B cell (primary cell): ENCODE measurements at regions of chr11 and their contacts with region 1.

Region 1: GRCh38 chr11:45964911-45965389 is 42.5 kb downstream of the LARGE2 start:
- DNase-seq: peak; percentile 82
- ATAC-seq: peak; percentile 95
- H3K4me3 ChIP-seq: no peak overlapping the region
- H3K4me3 Mint-ChIP-seq: no peak overlapping the region
- H3K27ac ChIP-seq: peak overlapping the region in 1 of 2 donors; percentile 71
- H3K27ac Mint-ChIP-seq: no peak overlapping the region
- H3K4me1 ChIP-seq: peaks cover 5 to 6% of the 10 kb centered on the region in 2 donors
- H3K4me1 Mint-ChIP-seq: no peaks in the 10 kb centered on the region
- H3K27me3 ChIP-seq: no peaks in the 10 kb centered on the region
- H3K27me3 Mint-ChIP-seq: no peaks in the 10 kb centered on the region
- CTCF ChIP-seq: peak; percentile 95

Region 2: GRCh38 chr11:45778341-45778740 is 186.6 kb before region 1 on chr11:
- CTCF ChIA-PET with region 1: no interaction called
- POLR2A ChIA-PET with region 1: no interaction called
- intact Hi-C with region 1: no loop called
- DNase-seq: no peak
- ATAC-seq: no peak
- H3K4me3 ChIP-seq: no peak overlapping the region
- H3K4me3 Mint-ChIP-seq: no peak overlapping the region
- H3K27ac ChIP-seq: no peak overlapping the region
- H3K27ac Mint-ChIP-seq: no peak overlapping the region
- H3K4me1 ChIP-seq: no peaks in the 10 kb centered on the region
- H3K4me1 Mint-ChIP-seq: no peaks in the 10 kb centered on the region
- H3K27me3 ChIP-seq: peaks cover 0 to 4% (median 1%) of the 10 kb centered on the region in 4 experiments
- H3K27me3 Mint-ChIP-seq: peaks cover 31% of the 10 kb centered on the region
- CTCF ChIP-seq: no peak

Region 3: GRCh38 chr11:45872513-45873356 is 92.2 kb before region 1 on chr11:
- CTCF ChIA-PET with region 1: interaction called, 24 read pairs
- POLR2A ChIA-PET with region 1: no interaction called
- intact Hi-C with region 1: no loop called
- DNase-seq: peak; percentile 60
- ATAC-seq: peak; percentile 70
- H3K4me3 ChIP-seq: no peak overlapping the region
- H3K4me3 Mint-ChIP-seq: no peak overlapping the region
- H3K27ac ChIP-seq: no peak overlapping the region
- H3K27ac Mint-ChIP-seq: no peak overlapping the region
- H3K4me1 ChIP-seq: no peaks in the 10 kb centered on the region
- H3K4me1 Mint-ChIP-seq: no peaks in the 10 kb centered on the region
- H3K27me3 ChIP-seq: no peaks in the 10 kb centered on the region
- H3K27me3 Mint-ChIP-seq: no peaks in the 10 kb centered on the region
- CTCF ChIP-seq: peak; percentile 73

Region 4: DNA sequence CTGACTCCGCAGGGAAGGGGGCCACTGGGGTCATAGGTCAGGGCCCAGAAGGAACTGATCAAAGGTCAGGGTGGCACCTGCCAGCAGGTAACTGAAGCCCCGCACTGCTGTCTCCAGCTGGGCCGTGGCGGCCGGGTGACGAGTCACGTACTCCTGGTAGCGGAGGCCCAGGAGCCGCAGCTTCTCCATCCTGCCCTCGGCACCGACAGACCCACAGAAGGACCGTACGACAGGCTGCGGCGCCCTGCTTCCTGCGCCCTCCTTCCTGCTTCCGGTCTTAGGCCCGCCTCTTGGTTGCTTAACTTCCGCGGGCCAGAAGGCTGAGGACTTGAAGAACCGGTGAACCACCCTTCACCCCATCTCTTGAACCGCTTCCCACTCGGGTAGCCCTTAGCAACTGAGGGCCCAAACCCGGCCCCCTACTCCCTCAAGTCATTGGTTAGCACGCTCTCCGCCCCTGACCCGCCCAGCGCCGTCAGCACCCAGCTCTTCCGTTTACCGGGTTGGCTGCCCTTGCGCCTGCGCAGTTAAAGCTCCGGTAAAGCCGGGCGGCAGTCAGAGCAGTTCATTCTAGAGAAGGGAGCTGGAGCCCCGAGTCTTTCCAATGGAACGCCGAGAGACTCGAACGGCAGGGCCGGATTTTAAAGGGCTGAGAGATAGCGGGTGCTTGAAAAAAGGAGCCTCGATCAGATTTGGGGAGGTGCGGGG is 47.2 kb before region 1 on chr11 and contains the start of gene PEX16:
- CTCF ChIA-PET with region 1: interaction called, 58 read pairs
- POLR2A ChIA-PET with region 1: interaction called, 6 read pairs
- intact Hi-C with region 1: loop called (anchors 2 kb)
- DNase-seq: peak; percentile 99
- ATAC-seq: peak; percentile 83
- H3K4me3 ChIP-seq: peak within 1 kb of the TSS; percentile 86 to 99 (median 90)
- H3K4me3 Mint-ChIP-seq: peak within 1 kb of the TSS; percentile 92
- H3K27ac ChIP-seq: peak within 1 kb of the TSS; percentile 88 to 95
- H3K27ac Mint-ChIP-seq: peak within 1 kb of the TSS; percentile 94
- H3K4me1 ChIP-seq: peaks cover 44 to 57% of the 10 kb centered on the region in 2 donors
- H3K4me1 Mint-ChIP-seq: peaks cover 64% of the 10 kb centered on the region
- H3K27me3 ChIP-seq: no peaks in the 10 kb centered on the region
- H3K27me3 Mint-ChIP-seq: no peaks in the 10 kb centered on the region
- CTCF ChIP-seq: no peak
- total RNA-seq, gene PEX16: 107 and 113 TPM in 2 replicates

Region 5: GRCh38 chr11:45939836-45940235 is 25.1 kb before region 1 on chr11:
- CTCF ChIA-PET with region 1: interaction called, 36 read pairs
- POLR2A ChIA-PET with region 1: interaction called, 8 read pairs
- intact Hi-C with region 1: no loop called
- DNase-seq: no peak
- ATAC-seq: no peak
- H3K4me3 ChIP-seq: no peak overlapping the region
- H3K4me3 Mint-ChIP-seq: no peak overlapping the region
- H3K27ac ChIP-seq: peak overlapping the region; percentile 13 to 92
- H3K27ac Mint-ChIP-seq: peak overlapping the region; percentile 43
- H3K4me1 ChIP-seq: peaks cover 45 to 48% of the 10 kb centered on the region in 2 donors
- H3K4me1 Mint-ChIP-seq: peaks cover 52% of the 10 kb centered on the region
- H3K27me3 ChIP-seq: no peaks in the 10 kb centered on the region
- H3K27me3 Mint-ChIP-seq: no peaks in the 10 kb centered on the region
- CTCF ChIP-seq: no peak

Region 6: GRCh38 chr11:45982656-45983470 is 17.9 kb after region 1 on chr11:
- CTCF ChIA-PET with region 1: interaction called, 47 read pairs
- POLR2A ChIA-PET with region 1: no interaction called
- intact Hi-C with region 1: no loop called
- DNase-seq: no peak
- ATAC-seq: no peak
- H3K4me3 ChIP-seq: no peak overlapping the region
- H3K4me3 Mint-ChIP-seq: no peak overlapping the region
- H3K27ac ChIP-seq: no peak overlapping the region
- H3K27ac Mint-ChIP-seq: no peak overlapping the region
- H3K4me1 ChIP-seq: no peaks in the 10 kb centered on the region
- H3K4me1 Mint-ChIP-seq: peaks cover 12% of the 10 kb centered on the region
- H3K27me3 ChIP-seq: no peaks in the 10 kb centered on the region
- H3K27me3 Mint-ChIP-seq: no peaks in the 10 kb centered on the region
- CTCF ChIP-seq: no peak

Region 7: GRCh38 chr11:46001448-46001914 is 36.5 kb after region 1 on chr11:
- CTCF ChIA-PET with region 1: interaction called, 42 read pairs
- POLR2A ChIA-PET with region 1: no interaction called
- intact Hi-C with region 1: loop called (anchors 1 kb)
- DNase-seq: no peak
- ATAC-seq: no peak
- H3K4me3 ChIP-seq: no peak overlapping the region
- H3K4me3 Mint-ChIP-seq: no peak overlapping the region
- H3K27ac ChIP-seq: no peak overlapping the region
- H3K27ac Mint-ChIP-seq: no peak overlapping the region
- H3K4me1 ChIP-seq: no peaks in the 10 kb centered on the region
- H3K4me1 Mint-ChIP-seq: peaks cover 1% of the 10 kb centered on the region
- H3K27me3 ChIP-seq: no peaks in the 10 kb centered on the region
- H3K27me3 Mint-ChIP-seq: no peaks in the 10 kb centered on the region
- CTCF ChIP-seq: no peak

Region 8: GRCh38 chr11:46865340-46865739 is 900.4 kb after region 1 on chr11:
- CTCF ChIA-PET with region 1: no interaction called
- POLR2A ChIA-PET with region 1: no interaction called
- intact Hi-C with region 1: no loop called
- DNase-seq: no peak
- ATAC-seq: no peak
- H3K4me3 ChIP-seq: no peak overlapping the region
- H3K4me3 Mint-ChIP-seq: no peak overlapping the region
- H3K27ac ChIP-seq: no peak overlapping the region
- H3K27ac Mint-ChIP-seq: no peak overlapping the region
- H3K4me1 ChIP-seq: no peaks in the 10 kb centered on the region
- H3K4me1 Mint-ChIP-seq: no peaks in the 10 kb centered on the region
- H3K27me3 ChIP-seq: no peaks in the 10 kb centered on the region
- H3K27me3 Mint-ChIP-seq: peaks cover 3% of the 10 kb centered on the region
- CTCF ChIP-seq: no peak